Spleen (tissue), 13 donors: ENCODE measurements at regions of chr7 and their contacts with region 1.

Region 1: DNA sequence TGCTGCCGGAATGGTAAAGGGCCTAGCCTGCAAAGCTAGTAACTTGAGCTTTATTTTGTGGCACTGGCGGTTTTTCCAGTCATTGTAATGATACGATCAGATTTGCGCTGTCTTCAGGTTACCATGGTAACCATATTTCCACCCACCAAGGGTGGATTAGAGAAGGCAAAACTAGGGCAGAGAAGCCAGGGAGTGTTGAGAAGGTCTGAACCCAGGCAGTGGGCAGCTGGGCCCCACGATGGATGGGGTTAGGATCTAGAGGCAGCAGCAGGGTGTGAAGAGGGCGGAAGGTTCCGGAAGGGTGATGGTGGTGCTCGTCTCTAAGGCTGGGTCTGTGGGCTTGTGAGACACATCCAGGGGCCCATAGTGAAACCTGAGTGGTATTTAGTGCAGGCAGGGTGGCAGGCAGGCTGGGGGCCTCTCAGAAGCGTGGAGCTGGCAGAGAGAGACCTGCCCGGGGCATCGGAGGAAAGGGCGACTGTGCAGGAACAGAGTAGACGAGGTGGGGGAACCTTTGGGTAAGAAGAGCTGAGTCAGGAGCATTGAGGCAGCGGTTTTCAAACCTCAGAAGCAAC is 87.9 kb upstream of the GTF2I start:
- DNase-seq: no peak
- H3K4me3 ChIP-seq: no peak overlapping the region
- H3K27ac ChIP-seq: no peak overlapping the region
- H3K4me1 ChIP-seq: no peaks in the 10 kb centered on the region
- H3K27me3 ChIP-seq: no peaks in the 10 kb centered on the region
- CTCF ChIP-seq: no peak
- POLR2A ChIP-seq: no peak

Region 2: GRCh38 chr7:74417419-74417971 is 152.1 kb before region 1 on chr7:
- intact Hi-C with region 1: loop called (anchors 5 kb)
- DNase-seq: peak; percentile 87
- H3K4me3 ChIP-seq: no peak overlapping the region
- H3K27ac ChIP-seq: no peak overlapping the region
- H3K4me1 ChIP-seq: peaks cover 0 to 5% (median 3%) of the 10 kb centered on the region in 6 donors
- H3K27me3 ChIP-seq: no peaks in the 10 kb centered on the region
- CTCF ChIP-seq: peak; percentile 85 to 95 (median 91)
- POLR2A ChIP-seq: no peak

Region 3: DNA sequence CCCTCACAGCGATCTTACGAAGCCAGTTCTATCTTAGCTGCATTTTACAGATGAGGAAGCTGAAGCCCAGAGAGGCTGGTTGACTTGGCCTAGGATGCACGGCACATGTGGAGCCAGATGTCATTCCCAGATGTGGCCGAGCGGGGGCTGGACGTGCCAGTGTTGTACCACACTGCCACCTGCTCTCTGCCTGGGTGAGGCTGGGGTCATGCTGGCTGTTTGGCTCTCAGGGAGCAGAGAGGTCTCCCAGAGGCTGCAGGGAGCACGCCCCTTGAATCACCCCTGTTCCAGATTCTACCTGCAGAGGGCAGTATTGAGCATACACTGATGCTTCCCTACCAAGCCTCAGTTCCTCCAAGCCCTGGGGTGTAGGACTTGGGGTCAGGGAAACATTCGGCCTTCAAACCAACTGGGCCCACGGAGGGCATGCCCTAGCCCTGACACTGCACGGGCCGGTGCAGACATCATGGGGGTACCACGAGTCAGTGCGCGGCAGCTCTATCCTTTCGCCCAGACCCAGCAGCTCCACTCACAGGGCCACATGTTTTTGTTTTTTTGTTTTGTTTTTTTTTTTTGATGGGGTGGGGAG is 119.7 kb before region 1 on chr7:
- intact Hi-C with region 1: loop called (anchors 10 kb)
- DNase-seq: no peak
- H3K4me3 ChIP-seq: no peak overlapping the region
- H3K27ac ChIP-seq: no peak overlapping the region
- H3K4me1 ChIP-seq: peaks cover 6 to 27% (median 21%) of the 10 kb centered on the region in 6 donors
- H3K27me3 ChIP-seq: peaks cover 0 to 28% (median 14%) of the 10 kb centered on the region in 7 donors
- CTCF ChIP-seq: peak; percentile 59 to 89 (median 77)
- POLR2A ChIP-seq: no peak

Region 4: DNA sequence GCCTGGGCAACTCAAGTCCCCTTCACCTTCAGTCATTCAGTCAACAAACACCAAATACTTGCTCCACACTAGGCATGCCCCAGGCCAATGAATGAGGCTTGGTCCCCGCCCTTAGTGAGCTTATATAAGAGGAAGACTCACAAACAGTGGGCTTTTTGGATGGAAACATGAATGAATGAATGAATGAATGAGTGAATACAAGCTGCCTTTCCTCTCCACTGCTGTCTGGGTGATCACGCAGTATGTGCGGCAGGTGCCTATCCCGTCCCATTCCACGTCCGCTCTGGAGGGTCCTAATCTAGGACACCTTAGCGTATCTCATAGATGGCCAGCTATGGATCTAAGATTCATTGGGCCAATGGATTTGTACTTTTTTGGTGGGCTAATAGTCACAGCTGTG is 68.2 kb after region 1 on chr7:
- intact Hi-C with region 1: no loop called
- DNase-seq: no peak
- H3K4me3 ChIP-seq: no peak overlapping the region
- H3K27ac ChIP-seq: no peak overlapping the region
- H3K4me1 ChIP-seq: peaks cover 0 to 2% (median under 1%) of the 10 kb centered on the region in 6 donors
- H3K27me3 ChIP-seq: no peaks in the 10 kb centered on the region
- CTCF ChIP-seq: no peak
- POLR2A ChIP-seq: no peak